CD14-positive monocyte (primary cell): ENCODE measurements at regions of chr16 and their contacts with region 1.

Region 1: GRCh38 chr16:28317040-28317880 is 24.9 kb downstream of the SBK1 start:
- DNase-seq: peak; percentile 47 to 67 (median 50)
- H3K4me3 ChIP-seq: no peak overlapping the region
- H3K4me3 Mint-ChIP-seq: no peak overlapping the region
- H3K27ac ChIP-seq: no peak overlapping the region
- H3K27ac Mint-ChIP-seq: no peak overlapping the region
- H3K4me1 ChIP-seq: no peaks in the 10 kb centered on the region
- H3K4me1 Mint-ChIP-seq: peaks cover 2% of the 10 kb centered on the region
- H3K27me3 ChIP-seq: no peaks in the 10 kb centered on the region
- H3K27me3 Mint-ChIP-seq: peaks cover 0 to 7% (median 1%) of the 10 kb centered on the region in 3 donors
- CTCF ChIP-seq: peak; percentile 87

Region 2: DNA sequence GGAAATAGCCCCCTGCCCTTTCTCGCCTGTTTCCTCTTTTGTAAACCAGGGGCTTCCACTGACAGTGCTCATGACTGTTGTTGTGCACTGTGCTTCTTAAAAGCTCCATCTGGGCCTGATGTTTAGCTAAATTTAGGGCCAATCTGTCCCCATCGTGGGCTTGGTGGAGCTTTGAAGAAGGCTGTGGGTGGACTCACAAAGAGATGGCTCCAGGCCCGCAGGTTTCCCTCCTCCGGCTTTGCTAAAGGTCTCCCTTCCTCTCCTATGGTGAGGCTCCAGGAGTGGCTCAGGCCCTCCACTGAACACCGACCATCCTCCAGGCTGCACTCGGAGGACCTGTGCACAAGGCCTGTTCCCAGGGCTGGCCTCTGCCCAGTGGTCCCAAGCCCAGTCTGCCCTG is 75.3 kb before region 1 on chr16:
- intact Hi-C with region 1: no loop called
- DNase-seq: no peak
- H3K4me3 ChIP-seq: no peak overlapping the region
- H3K4me3 Mint-ChIP-seq: no peak overlapping the region
- H3K27ac ChIP-seq: no peak overlapping the region
- H3K27ac Mint-ChIP-seq: no peak overlapping the region
- H3K4me1 ChIP-seq: no peaks in the 10 kb centered on the region
- H3K4me1 Mint-ChIP-seq: no peaks in the 10 kb centered on the region
- H3K27me3 ChIP-seq: no peaks in the 10 kb centered on the region
- H3K27me3 Mint-ChIP-seq: peaks cover 0 to 8% (median 1%) of the 10 kb centered on the region in 3 donors
- CTCF ChIP-seq: no peak

Region 3: GRCh38 chr16:28277537-28278388 is 39.5 kb before region 1 on chr16:
- intact Hi-C with region 1: loop called in 1 of 2 experiments (anchors 2 kb)
- DNase-seq: peak; percentile 70 to 74 (median 73)
- H3K4me3 ChIP-seq: peak overlapping the region in 2 of 3 experiments; percentile 5 to 72
- H3K4me3 Mint-ChIP-seq: peak overlapping the region; percentile 71 to 76
- H3K27ac ChIP-seq: no peak overlapping the region
- H3K27ac Mint-ChIP-seq: peak overlapping the region in 1 of 7 donors; percentile 15
- H3K4me1 ChIP-seq: peaks cover 5 to 7% of the 10 kb centered on the region in 2 donors
- H3K4me1 Mint-ChIP-seq: peaks cover 8% of the 10 kb centered on the region
- H3K27me3 ChIP-seq: peaks cover 0 to 10% of the 10 kb centered on the region in 2 donors
- H3K27me3 Mint-ChIP-seq: peaks cover 20 to 34% (median 21%) of the 10 kb centered on the region in 3 donors
- CTCF ChIP-seq: peak; percentile 98